ENCODE measurements at regions of chr9 and their contacts with region 1.

Region 1: GRCh38 chr9:33329117-33329563 is 38.8 kb downstream of the NFX1 start:
- DNase-seq: no peak
- ATAC-seq: no peak
- H3K4me3 ChIP-seq: no peak overlapping the region
- H3K4me3 Mint-ChIP-seq: no peak overlapping the region
- H3K27ac ChIP-seq: no peak overlapping the region
- H3K27ac Mint-ChIP-seq: no peak overlapping the region
- H3K4me1 ChIP-seq: no peaks in the 10 kb centered on the region
- H3K4me1 Mint-ChIP-seq: peaks cover 5% of the 10 kb centered on the region
- H3K27me3 ChIP-seq: no peaks in the 10 kb centered on the region
- H3K27me3 Mint-ChIP-seq: no peaks in the 10 kb centered on the region
- CTCF ChIP-seq: no peak

Region 2: GRCh38 chr9:33350310-33350709 is 21.2 kb after region 1 on chr9:
- CTCF ChIA-PET with region 1: no interaction called
- POLR2A ChIA-PET with region 1: interaction called, 3 read pairs
- intact Hi-C with region 1: loop called in 1 of 2 experiments (anchors 2 kb)
- DNase-seq: no peak
- ATAC-seq: no peak
- H3K4me3 ChIP-seq: no peak overlapping the region
- H3K4me3 Mint-ChIP-seq: no peak overlapping the region
- H3K27ac ChIP-seq: no peak overlapping the region
- H3K27ac Mint-ChIP-seq: peak overlapping the region; percentile 44
- H3K4me1 ChIP-seq: no peaks in the 10 kb centered on the region
- H3K4me1 Mint-ChIP-seq: peaks cover 25% of the 10 kb centered on the region
- H3K27me3 ChIP-seq: no peaks in the 10 kb centered on the region
- H3K27me3 Mint-ChIP-seq: no peaks in the 10 kb centered on the region
- CTCF ChIP-seq: no peak

Region 3: DNA sequence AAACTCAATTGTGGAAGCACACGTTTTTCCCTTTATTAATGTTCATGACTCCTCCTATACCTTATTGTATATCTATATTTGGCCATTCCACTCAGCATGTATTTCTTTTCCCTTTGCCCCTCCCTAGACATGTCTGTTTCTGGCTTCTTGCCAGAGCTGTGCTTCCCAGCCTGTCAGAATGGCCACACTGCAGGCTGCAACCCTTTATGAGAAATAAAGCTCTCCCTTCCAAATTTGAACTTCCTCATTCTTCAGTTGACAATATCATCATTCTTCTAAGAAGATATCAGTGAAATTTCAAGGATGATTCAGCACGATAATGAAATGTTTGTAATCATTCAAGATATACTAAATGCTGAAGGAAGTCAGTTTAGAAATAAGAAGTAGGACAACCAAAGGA is 358.6 kb after region 1 on chr9:
- CTCF ChIA-PET with region 1: no interaction called
- POLR2A ChIA-PET with region 1: no interaction called
- intact Hi-C with region 1: no loop called
- DNase-seq: peak in 3 of 14 experiments; percentile 3 to 15 (median 6)
- ATAC-seq: no peak
- H3K4me3 ChIP-seq: no peak overlapping the region
- H3K4me3 Mint-ChIP-seq: no peak overlapping the region
- H3K27ac ChIP-seq: no peak overlapping the region
- H3K27ac Mint-ChIP-seq: no peak overlapping the region
- H3K4me1 ChIP-seq: no peaks in the 10 kb centered on the region
- H3K4me1 Mint-ChIP-seq: no peaks in the 10 kb centered on the region
- H3K27me3 ChIP-seq: peaks cover under 1 to 16% of the 10 kb centered on the region in 2 experiments
- H3K27me3 Mint-ChIP-seq: peaks cover 39% of the 10 kb centered on the region
- CTCF ChIP-seq: no peak